CD4-positive, alpha-beta memory T cell (primary cell): ENCODE measurements at regions of chr1 and their contacts with region 1.

Region 1: DNA sequence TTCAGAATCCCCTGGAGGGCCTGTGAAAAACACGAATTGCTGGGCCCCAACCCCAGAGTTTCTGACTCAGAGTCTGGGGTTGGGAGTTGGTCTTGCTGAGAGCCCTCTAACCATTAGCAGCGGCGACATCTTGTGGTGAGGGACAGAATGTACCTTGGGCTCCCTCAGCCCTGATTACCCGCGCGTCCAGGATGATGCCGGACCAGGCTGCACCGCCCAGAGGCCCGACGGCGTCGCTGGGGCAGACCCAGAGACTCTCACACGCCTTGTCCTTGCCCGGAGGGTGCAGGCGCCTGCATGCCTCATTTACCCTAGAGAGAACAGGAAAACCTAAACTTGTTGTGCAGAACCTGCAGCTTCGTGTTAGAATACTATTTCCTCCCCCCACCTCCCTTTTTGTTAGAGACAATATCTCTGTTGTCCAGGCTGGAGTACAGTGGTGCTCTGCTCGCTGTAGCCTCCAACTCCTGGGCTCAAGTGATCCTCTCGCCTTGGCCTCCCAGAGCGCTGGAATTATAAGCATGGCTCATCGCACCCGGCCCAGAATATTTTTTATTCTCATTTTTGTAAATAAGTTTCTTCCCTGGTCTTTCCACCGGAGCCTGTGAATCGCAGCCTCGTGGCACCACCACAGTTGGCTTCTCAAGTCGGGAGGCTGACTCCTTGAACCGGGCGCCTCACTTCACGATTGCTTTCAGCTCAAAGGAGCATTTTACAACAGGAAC is 22.2 kb upstream of the RD3 start:
- DNase-seq: peak; percentile 49 to 69 (median 54)
- H3K4me3 ChIP-seq: no peak overlapping the region
- H3K4me3 Mint-ChIP-seq: peak overlapping the region in 7 of 8 donors; percentile 72 to 89 (median 79)
- H3K27ac ChIP-seq: no peak overlapping the region
- H3K27ac Mint-ChIP-seq: peak overlapping the region in 4 of 7 donors; percentile 60 to 89 (median 66)
- H3K4me1 ChIP-seq: peaks cover 20% of the 10 kb centered on the region
- H3K4me1 Mint-ChIP-seq: peaks cover 10 to 18% (median 15%) of the 10 kb centered on the region in 4 donors
- H3K27me3 ChIP-seq: no peaks in the 10 kb centered on the region
- H3K27me3 Mint-ChIP-seq: no peaks in the 10 kb centered on the region

Region 2: DNA sequence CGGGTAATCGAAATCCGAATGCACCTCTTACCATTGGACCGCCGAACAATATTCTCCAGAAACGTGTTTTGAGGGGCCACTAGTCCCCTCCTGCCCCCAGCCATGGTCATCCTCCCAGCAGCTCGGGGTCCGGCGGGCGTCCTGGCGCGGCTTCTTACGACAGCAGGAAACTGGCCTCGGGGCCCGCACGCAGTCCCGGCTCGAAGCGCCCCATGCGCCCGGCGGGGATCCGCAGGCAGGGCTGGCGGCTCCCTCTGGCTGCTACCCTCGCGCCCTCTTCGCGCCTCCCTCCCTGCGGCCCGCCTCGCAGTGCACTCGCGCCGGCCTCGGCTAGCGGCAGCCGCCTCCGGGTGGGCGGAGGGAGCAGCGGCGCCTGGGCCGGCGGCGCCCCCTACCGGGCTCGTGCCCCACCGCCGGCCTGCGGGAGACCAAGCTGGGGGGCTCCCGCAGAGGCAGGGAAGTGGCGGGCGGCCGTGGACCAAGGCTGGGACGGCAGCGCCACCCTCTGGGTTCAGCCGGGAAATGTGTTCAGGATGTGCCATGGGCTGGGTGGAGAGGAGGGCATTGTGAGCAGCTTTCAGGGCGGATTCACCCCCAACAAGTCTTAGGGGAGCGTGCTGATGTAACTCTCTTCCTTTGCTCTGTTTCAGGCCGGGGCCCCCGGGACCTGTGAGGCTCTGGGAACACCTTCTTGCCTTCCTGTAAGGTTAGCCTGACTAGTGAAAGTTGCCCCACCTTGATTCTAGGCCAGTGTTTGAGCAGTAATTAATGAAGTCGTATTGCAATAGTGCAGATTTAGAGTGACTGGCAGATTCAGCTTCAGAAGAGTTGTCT is 380.1 kb before region 1 on chr1 and contains the start of gene KCNH1:
- CTCF ChIA-PET with region 1: no interaction called
- POLR2A ChIA-PET with region 1: no interaction called
- intact Hi-C with region 1: loop called (anchors 10 kb)
- DNase-seq: peak; percentile 67 to 76 (median 70)
- H3K4me3 ChIP-seq: peak within 1 kb of the TSS in 1 of 2 donors; percentile 19
- H3K4me3 Mint-ChIP-seq: peak within 1 kb of the TSS; percentile 74 to 83 (median 77)
- H3K27ac ChIP-seq: no peak within 1 kb of the TSS
- H3K27ac Mint-ChIP-seq: no peak within 1 kb of the TSS
- H3K4me1 ChIP-seq: peaks cover 17% of the 10 kb centered on the region
- H3K4me1 Mint-ChIP-seq: peaks cover 3 to 20% (median 7%) of the 10 kb centered on the region in 4 donors
- H3K27me3 ChIP-seq: peaks cover 17% of the 10 kb centered on the region
- H3K27me3 Mint-ChIP-seq: peaks cover 28 to 32% of the 10 kb centered on the region in 2 donors
- total RNA-seq, gene KCNH1: not detected

Region 3: DNA sequence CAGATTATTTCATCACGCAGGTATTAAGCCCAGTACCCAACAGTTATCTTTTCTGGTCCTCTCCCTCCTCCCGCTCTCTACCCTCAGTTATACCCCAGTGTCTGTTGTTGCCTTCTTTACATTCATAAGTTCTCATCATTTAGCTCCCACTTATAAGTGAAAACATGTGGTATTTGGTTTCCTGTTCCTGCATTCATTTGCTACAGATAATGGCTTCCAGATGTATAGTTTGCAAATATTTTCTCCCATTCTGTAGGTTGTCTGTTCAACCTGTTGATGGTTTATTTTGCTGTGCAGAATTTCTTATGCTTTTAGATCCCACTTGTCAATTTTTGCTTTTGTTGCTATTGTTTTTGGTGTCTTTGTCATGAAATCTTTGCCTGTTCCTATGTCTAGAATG is 359.2 kb before region 1 on chr1:
- CTCF ChIA-PET with region 1: no interaction called
- POLR2A ChIA-PET with region 1: no interaction called
- intact Hi-C with region 1: no loop called
- DNase-seq: no peak
- H3K4me3 ChIP-seq: no peak overlapping the region
- H3K4me3 Mint-ChIP-seq: no peak overlapping the region
- H3K27ac ChIP-seq: no peak overlapping the region
- H3K27ac Mint-ChIP-seq: peak overlapping the region in 1 of 7 donors; percentile 26
- H3K4me1 ChIP-seq: no peaks in the 10 kb centered on the region
- H3K4me1 Mint-ChIP-seq: peaks cover 0 to 7% (median 1%) of the 10 kb centered on the region in 4 donors
- H3K27me3 ChIP-seq: no peaks in the 10 kb centered on the region
- H3K27me3 Mint-ChIP-seq: peaks cover 4% of the 10 kb centered on the region in 2 donors

Region 4: DNA sequence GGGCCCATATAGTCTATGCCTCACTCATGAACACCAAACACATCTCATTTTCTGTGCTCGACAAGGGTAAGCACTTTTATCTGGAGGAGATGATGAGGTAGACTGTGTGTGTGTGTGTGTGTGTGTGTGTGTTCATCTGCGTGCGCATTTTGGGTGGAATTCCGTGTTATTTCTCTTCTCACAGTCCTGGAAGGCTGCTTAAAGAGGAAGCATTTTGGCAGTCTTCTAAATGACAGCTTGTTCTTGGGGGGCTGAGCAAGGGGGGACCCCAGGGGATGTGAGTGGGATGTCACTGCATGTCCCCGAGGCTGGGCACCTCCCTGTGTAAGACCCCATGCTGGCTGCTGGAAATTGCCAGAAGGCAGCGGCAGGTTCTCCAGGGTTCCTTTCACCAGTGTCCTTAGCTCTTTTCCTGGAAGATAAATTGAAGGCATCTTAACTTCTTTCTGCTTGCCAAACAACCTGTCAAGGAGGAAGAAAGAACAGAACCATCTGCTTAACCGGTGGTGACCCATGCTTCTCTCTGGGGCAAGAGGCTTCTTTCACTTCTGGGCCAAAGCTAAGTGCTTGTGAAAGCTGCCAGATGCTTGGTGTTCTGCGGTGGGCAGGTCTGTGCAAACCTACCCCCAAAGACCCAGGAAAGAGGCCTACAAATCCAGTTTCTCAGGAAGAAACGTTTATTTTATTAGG is 12.3 kb before region 1 on chr1:
- CTCF ChIA-PET with region 1: interaction called, 13 read pairs
- POLR2A ChIA-PET with region 1: no interaction called
- intact Hi-C with region 1: no loop called
- DNase-seq: no peak
- H3K4me3 ChIP-seq: no peak overlapping the region
- H3K4me3 Mint-ChIP-seq: no peak overlapping the region
- H3K27ac ChIP-seq: no peak overlapping the region
- H3K27ac Mint-ChIP-seq: peak overlapping the region in 1 of 7 donors; percentile 13
- H3K4me1 ChIP-seq: no peaks in the 10 kb centered on the region
- H3K4me1 Mint-ChIP-seq: no peaks in the 10 kb centered on the region
- H3K27me3 ChIP-seq: no peaks in the 10 kb centered on the region
- H3K27me3 Mint-ChIP-seq: peaks cover 0 to 7% of the 10 kb centered on the region in 2 donors

Region 5: GRCh38 chr1:211578640-211579433 is 64.6 kb after region 1 on chr1 and contains the start of gene SLC30A1:
- CTCF ChIA-PET with region 1: interaction called, 7 read pairs
- POLR2A ChIA-PET with region 1: interaction called, 3 read pairs
- intact Hi-C with region 1: loop called (anchors 1 kb)
- DNase-seq: peak; percentile 99
- H3K4me3 ChIP-seq: peak within 1 kb of the TSS; percentile 72 to 86
- H3K4me3 Mint-ChIP-seq: peak within 1 kb of the TSS; percentile 90 to 96 (median 92)
- H3K27ac ChIP-seq: peak within 1 kb of the TSS; percentile 76
- H3K27ac Mint-ChIP-seq: peak within 1 kb of the TSS; percentile 86 to 97 (median 93)
- H3K4me1 ChIP-seq: peaks cover 42% of the 10 kb centered on the region
- H3K4me1 Mint-ChIP-seq: peaks cover 23 to 56% (median 36%) of the 10 kb centered on the region in 4 donors
- H3K27me3 ChIP-seq: no peaks in the 10 kb centered on the region
- H3K27me3 Mint-ChIP-seq: peaks cover 0 to 2% of the 10 kb centered on the region in 2 donors
- total RNA-seq, gene SLC30A1: 10.1 to 10.6 TPM

Region 6: DNA sequence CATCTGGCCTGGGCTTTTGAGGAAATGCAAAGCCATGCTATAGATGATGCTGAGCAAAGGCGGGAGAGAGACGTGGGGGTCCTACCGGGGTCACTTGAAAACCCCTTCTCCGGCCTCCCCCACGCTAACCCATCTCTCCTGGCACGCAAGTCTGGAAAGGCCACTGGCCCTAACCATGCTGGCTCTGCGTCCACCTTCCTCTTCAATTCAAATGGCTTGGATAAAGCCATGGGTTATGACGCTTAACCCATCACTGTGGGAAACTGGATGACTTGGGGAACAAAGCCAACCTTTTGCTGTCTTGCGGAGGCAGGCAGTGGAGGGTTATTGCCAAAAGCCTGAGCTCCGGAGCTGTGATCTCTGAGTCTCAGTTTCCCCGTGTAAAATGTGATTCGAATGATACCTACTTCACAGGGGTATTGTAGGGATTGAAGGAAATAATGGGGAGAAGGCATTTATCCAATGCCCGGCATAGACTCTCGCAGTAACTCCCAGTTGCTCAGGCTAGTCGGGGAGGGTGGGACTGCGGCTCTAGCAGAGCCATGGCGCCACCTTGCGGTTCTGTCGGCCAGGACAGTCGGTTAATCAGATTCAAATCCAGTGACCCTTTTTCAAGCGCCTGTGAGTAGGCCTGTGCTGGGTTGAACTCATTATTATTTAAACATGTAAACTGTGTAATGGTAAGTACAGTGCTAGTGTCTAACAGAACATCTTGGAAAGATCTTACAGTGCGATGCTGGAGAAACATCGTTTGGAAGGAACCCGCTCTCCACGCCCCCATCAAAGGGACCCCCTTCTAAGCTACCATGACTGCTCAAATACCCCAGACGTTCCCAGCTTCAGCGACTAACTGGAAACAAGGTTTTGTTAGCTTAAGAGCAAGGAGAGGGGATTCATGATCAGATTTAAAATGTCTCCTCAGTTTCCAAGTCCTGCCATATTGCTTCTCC is 140.9 kb after region 1 on chr1:
- CTCF ChIA-PET with region 1: interaction called, 64 read pairs
- POLR2A ChIA-PET with region 1: no interaction called
- intact Hi-C with region 1: loop called (anchors 1 kb)
- DNase-seq: peak; percentile 71 to 75 (median 74)
- H3K4me3 ChIP-seq: no peak overlapping the region
- H3K4me3 Mint-ChIP-seq: no peak overlapping the region
- H3K27ac ChIP-seq: no peak overlapping the region
- H3K27ac Mint-ChIP-seq: no peak overlapping the region
- H3K4me1 ChIP-seq: no peaks in the 10 kb centered on the region
- H3K4me1 Mint-ChIP-seq: peaks cover 0 to 2% (median 0%) of the 10 kb centered on the region in 4 donors
- H3K27me3 ChIP-seq: no peaks in the 10 kb centered on the region
- H3K27me3 Mint-ChIP-seq: peaks cover 0 to 2% of the 10 kb centered on the region in 2 donors